ENCODE measurements at regions of chr16 and their contacts with region 1.

Region 1: DNA sequence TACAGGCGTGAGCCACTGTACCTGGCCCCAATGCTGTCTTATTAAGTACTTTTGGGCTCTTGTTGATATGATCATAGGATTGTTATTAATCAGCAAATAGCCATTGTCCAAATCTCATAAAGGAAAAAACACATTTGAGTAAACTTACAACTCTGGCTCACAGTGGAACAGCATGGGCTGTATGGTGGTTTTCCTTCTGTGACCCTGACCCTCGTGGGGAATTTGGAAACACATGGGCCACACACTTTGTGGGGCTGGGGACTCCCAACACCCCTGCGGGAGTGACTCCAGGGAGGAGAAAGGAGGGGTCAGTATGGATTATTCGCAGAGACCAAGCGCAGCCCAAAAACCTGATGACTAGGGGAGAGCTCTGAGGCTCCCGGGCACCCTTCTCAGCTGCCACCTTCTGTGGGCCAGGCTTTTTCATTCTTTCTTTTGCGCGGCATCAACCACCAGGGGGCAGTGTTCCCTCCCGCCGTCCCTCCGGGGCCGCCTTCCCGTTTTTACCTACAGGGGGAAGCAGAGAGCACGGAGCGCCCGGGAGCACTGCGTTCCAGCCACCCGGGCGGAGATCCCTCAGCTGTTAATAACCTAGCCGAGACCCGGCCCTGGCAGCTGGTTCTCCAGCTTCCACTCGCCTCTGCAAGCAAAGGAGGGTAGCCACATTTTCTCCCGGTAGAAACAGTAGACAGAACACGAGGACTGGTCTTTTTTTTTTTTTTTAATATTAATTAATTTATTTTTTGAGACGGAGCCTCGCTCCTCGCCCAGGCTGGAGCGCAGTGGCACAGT is 9.7 kb downstream of the TSNAXIP1 start:
- DNase-seq: peak; percentile 85 to 94 (median 92)
- ATAC-seq: peak; percentile 92
- H3K4me3 ChIP-seq: no peak overlapping the region
- H3K27ac ChIP-seq: no peak overlapping the region
- H3K4me1 ChIP-seq: no peaks in the 10 kb centered on the region
- H3K27me3 ChIP-seq: no peaks in the 10 kb centered on the region

Region 2: DNA sequence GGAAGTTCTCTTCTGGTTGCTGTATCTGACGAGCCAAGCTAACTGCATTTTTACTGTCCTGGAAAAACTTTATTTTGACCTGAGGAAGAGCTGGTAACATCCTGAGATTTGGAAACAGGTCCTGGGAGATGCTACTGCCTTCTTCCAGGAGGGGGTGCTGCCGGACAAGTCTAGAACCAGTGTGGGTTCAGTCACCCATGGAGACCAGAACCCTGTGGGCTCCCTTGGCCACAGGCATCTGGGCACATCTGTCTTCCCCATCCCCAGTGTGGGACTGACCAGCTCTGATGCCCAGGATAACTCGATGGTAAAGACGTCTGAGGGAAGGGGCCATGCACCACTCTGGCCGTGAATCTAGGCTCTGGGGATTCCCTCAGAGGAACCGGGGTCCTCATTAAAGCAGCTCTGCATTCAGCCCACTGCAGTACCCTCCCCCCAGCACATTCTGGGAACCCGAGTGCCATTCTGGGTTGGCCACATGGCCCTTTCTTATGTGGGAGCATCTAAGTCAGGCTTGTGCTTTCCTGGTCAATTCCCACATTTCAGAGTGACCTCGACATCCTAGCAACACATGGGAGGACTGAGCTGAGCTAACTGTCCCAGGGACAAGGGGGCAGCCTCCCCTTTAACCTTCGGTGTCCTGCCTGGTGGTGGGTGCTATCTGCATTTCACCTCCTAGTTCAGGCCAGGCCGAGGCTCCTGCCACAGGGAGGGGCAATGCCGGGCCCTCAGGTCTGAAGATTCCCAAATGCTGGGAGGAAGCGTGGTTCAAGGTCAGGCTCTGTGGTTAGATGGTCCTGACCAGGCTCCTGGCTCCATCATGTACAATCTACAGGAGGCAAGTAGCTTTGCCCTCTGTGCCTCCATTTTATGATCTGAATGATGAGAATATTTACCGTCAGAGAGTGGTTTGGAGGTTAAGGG is 143.4 kb before region 1 on chr16:
- intact Hi-C with region 1: loop called in 1 of 4 experiments (anchors 10 kb)
- DNase-seq: peak; percentile 74 to 87 (median 84)
- ATAC-seq: peak; percentile 44 to 69
- H3K4me3 ChIP-seq: no peak overlapping the region
- H3K27ac ChIP-seq: peak overlapping the region; percentile 71
- H3K4me1 ChIP-seq: peaks cover 5% of the 10 kb centered on the region
- H3K27me3 ChIP-seq: no peaks in the 10 kb centered on the region

Region 3: GRCh38 chr16:67872786-67873537 is 56.5 kb after region 1 on chr16 and contains the start of gene EDC4:
- intact Hi-C with region 1: no loop called
- DNase-seq: peak; percentile 89 to 96 (median 93)
- ATAC-seq: peak; percentile 91 to 92
- H3K4me3 ChIP-seq: peak within 1 kb of the TSS; percentile 85
- H3K27ac ChIP-seq: peak within 1 kb of the TSS; percentile 61
- H3K4me1 ChIP-seq: peaks cover 9% of the 10 kb centered on the region
- H3K27me3 ChIP-seq: no peaks in the 10 kb centered on the region
- total RNA-seq, gene EDC4: 29.7 to 35.6 (median 31.9) TPM

Region 4: GRCh38 chr16:67928561-67929364 is 112.3 kb after region 1 on chr16:
- intact Hi-C with region 1: loop called in 2 of 4 experiments (anchors 5 kb)
- DNase-seq: peak; percentile 69 to 88 (median 88)
- ATAC-seq: peak; percentile 59 to 62
- H3K4me3 ChIP-seq: no peak overlapping the region
- H3K27ac ChIP-seq: no peak overlapping the region
- H3K4me1 ChIP-seq: peaks cover 3% of the 10 kb centered on the region
- H3K27me3 ChIP-seq: no peaks in the 10 kb centered on the region

Region 5: DNA sequence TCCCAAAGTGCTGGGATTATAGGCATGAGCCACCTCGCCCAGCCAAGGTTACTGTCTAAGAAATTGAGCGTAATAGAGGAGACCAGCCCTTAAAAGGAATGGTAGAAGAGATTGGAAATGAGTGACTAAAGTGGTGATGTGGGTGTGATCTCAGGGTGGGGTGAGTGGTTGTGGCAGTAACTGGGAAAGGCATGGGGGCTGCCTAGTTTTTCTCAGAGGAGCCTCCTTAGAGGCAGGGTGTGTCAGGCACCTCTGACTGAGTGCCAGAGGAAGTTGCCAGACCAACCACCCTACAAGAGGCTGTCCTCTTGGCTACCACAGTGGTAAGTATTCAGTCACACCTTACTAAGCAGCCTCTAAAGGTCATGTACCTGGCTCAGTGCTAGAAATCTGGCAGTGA is 215.5 kb after region 1 on chr16:
- intact Hi-C with region 1: loop called in 1 of 4 experiments (anchors 10 kb)
- DNase-seq: no peak
- ATAC-seq: peak; percentile 26 to 53
- H3K4me3 ChIP-seq: no peak overlapping the region
- H3K27ac ChIP-seq: no peak overlapping the region
- H3K4me1 ChIP-seq: no peaks in the 10 kb centered on the region
- H3K27me3 ChIP-seq: no peaks in the 10 kb centered on the region

Region 6: DNA sequence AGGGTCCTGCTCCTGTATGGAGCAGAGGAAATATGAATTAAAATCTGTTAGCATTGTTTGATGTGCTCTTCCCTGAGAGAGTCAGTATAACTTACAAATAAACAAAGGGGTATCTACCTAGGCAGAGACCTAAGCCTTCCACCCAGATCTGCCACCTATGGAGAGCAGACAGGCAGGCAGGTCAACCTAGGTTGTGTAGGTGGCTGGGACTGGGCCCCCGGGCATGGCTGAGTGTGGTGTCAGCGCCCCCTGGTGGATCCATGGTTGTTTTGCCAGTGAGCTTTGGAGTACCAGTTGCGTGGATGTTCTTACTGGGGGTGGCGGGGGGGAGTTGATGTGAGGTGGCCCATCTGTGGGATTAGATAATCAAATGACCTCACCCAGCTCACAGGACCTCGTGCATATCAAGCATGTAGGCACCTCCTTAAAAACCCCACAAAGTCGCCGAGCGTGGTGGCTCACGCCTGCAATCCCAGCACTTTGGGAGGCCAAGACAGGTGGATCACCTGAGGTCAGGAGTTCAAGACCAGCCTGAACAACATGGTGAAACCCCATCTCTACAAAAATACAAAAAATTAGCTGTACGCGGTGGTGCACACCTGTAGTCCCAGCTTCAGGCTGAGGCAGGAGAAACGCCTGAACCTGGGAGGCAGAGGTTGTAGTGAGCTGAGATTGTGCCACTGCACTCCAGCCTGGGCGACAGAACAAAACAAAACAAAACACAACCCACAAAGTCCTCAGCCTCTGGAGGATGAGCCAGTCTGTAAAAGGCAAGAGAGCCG is 224.3 kb after region 1 on chr16:
- intact Hi-C with region 1: loop called in 3 of 4 experiments (anchors 5 to 10 kb)
- DNase-seq: peak; percentile 81 to 92 (median 91)
- ATAC-seq: peak; percentile 93 to 94
- H3K4me3 ChIP-seq: no peak overlapping the region
- H3K27ac ChIP-seq: no peak overlapping the region
- H3K4me1 ChIP-seq: no peaks in the 10 kb centered on the region
- H3K27me3 ChIP-seq: no peaks in the 10 kb centered on the region